Heart right ventricle (tissue), 16 donors: ENCODE measurements at regions of chrX and their contacts with region 1.

Region 1: GRCh38 chrX:69387567-69388487 is 116.3 kb upstream of the NALF2 start:
- DNase-seq: peak; percentile 32 to 33
- ATAC-seq: peak in 6 of 8 donors; percentile 46 to 75 (median 68)
- H3K4me3 ChIP-seq: no peak overlapping the region
- H3K27ac ChIP-seq: no peak overlapping the region
- H3K4me1 ChIP-seq: peaks cover 0 to 4% (median 0%) of the 10 kb centered on the region in 9 donors
- H3K27me3 ChIP-seq: peaks cover 0 to 65% (median 0%) of the 10 kb centered on the region in 7 donors
- CTCF ChIP-seq: peak; percentile 23 to 78 (median 70)

Region 2: DNA sequence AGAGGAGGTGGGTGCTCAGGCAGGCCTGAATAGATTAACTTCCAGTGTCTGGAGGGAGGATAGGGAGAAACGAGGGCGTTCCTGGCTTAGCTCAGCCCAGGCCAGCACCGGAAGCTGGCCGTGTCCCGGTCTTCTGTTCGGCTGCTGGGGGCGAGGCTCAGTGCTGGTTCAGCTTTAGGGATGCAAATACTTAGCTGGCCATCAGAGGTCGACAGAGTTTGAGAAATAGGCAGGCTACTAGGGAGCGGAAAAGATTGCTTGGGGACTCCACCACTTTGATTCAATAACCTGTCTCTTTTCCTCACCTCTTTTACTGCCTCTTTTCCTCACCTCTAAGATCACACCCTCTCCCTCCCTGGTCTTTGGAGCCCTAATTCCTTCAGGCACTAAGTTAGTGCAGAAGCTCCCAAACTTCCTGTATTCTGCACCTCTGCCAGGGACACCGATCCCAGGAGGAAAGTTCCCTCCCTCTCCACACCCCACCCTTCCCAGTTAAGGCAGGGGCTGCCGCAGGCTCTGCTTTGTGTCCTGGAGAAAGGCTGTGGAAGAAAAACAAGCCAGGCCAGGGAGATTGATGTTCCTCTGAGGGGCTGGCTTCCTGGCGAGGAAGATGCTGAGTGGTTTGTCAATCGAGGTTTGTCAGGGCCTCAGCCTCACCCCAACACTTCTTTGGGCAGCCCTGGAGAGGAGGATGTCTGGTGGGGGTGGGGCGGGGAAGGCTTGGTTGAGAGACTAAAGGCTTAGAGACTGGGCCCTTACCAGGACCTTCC is 565.0 kb before region 1 on chrX:
- intact Hi-C with region 1: loop called (anchors 5 to 10 kb)
- DNase-seq: peak in 1 of 2 donors; percentile 40
- ATAC-seq: peak; percentile 79 to 93 (median 90)
- H3K4me3 ChIP-seq: no peak overlapping the region
- H3K27ac ChIP-seq: no peak overlapping the region
- H3K4me1 ChIP-seq: peaks cover 0 to 9% (median 0%) of the 10 kb centered on the region in 9 donors
- H3K27me3 ChIP-seq: peaks cover 0 to 56% (median 0%) of the 10 kb centered on the region in 7 donors
- CTCF ChIP-seq: peak; percentile 33 to 75 (median 67)

Region 3: GRCh38 chrX:69060631-69061408 is 327.0 kb before region 1 on chrX:
- intact Hi-C with region 1: loop called in 1 of 10 experiments (anchors 10 kb)
- DNase-seq: peak; percentile 22 to 60
- ATAC-seq: peak; percentile 79 to 89 (median 82)
- H3K4me3 ChIP-seq: no peak overlapping the region
- H3K27ac ChIP-seq: no peak overlapping the region
- H3K4me1 ChIP-seq: peaks cover 0 to 6% (median 0%) of the 10 kb centered on the region in 9 donors
- H3K27me3 ChIP-seq: peaks cover 0 to 8% (median 0%) of the 10 kb centered on the region in 7 donors
- CTCF ChIP-seq: peak in 8 of 9 donors; percentile 18 to 67 (median 56)

Region 4: DNA sequence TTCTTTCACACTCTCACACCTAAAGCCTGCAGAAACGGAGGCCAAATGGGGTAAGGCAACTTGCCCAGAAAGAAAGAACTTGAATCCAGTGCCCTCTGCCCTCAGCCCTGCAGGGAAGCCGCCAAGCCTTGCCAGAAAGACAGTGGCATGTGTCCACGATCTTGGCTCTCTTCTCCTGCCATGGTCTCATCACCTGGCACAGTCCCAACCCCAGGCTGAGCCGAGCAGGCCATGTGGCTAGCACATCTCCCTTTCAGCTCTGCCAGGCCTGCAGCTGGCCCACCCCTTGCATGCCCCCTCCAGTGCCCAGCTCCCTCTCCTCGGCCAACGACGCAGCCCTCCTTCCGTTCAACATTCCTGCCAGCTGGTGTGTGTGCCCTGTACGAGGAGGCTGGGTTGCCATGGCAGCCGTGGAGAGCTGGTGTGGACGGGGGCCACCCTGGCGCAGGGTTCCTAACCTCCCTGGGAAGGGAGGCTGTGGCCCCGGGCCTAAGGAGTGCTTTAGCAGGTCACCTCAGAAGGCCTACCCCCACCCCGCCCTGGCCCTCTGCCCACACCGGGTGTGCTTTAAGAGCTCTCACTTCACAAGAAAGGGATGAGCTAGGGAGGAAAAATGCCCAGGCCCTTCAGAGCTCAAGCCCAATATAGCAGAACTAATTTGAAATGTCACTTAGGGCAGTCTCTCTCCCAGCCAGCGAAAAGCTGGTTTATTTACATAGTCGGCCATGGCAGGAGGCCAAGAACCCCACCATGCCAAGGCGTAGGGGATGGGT is 149.5 kb before region 1 on chrX:
- intact Hi-C with region 1: loop called in 2 of 10 experiments (anchors 10 kb)
- DNase-seq: peak; percentile 16 to 40
- ATAC-seq: peak; percentile 29 to 88 (median 78)
- H3K4me3 ChIP-seq: no peak overlapping the region
- H3K27ac ChIP-seq: peak overlapping the region in 5 of 10 donors; percentile 15 to 54 (median 30)
- H3K4me1 ChIP-seq: peaks cover 0 to 6% (median 0%) of the 10 kb centered on the region in 9 donors
- H3K27me3 ChIP-seq: peaks cover 0 to 42% (median 0%) of the 10 kb centered on the region in 7 donors
- CTCF ChIP-seq: no peak

Region 5: DNA sequence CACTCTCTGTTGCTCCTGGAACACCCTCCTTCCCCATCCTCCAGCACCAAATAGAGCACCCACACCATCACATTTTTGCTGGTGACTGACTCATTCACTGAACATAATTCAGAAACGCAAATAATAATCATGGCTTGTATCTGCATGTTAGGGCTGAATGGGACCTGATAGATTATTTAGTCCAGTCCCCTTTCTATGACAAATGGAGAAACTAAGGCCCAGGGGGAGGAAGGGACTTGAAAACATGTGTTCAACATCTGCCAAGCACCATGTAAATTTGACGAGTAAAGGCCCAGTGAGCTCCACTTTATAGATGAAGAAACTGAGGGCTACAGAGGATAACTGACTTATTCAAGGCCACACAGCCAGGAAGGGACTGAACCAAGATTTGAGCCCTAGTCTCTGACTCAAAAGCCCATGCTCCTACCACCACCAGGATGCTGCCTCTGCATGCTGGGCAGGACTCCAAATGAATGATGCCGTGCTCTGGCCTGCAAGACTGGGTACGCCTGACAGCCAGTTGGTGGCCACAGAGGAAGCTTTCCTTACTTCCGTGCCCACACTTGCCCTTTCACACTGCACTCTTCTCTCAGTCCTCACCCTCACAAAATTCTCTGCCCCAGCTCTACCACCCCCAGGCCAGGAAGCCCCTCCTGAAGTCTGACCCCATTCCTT is 89.2 kb before region 1 on chrX:
- intact Hi-C with region 1: loop called in 4 of 10 experiments (anchors 10 kb)
- DNase-seq: no peak
- ATAC-seq: peak in 2 of 8 donors; percentile 33 to 46
- H3K4me3 ChIP-seq: no peak overlapping the region
- H3K27ac ChIP-seq: no peak overlapping the region
- H3K4me1 ChIP-seq: no peaks in the 10 kb centered on the region
- H3K27me3 ChIP-seq: peaks cover 0 to 15% (median 0%) of the 10 kb centered on the region in 7 donors
- CTCF ChIP-seq: no peak

Region 6: GRCh38 chrX:69305333-69306062 is 82.3 kb before region 1 on chrX:
- intact Hi-C with region 1: loop called in 2 of 10 experiments (anchors 10 kb)
- DNase-seq: no peak
- ATAC-seq: no peak
- H3K4me3 ChIP-seq: no peak overlapping the region
- H3K27ac ChIP-seq: no peak overlapping the region
- H3K4me1 ChIP-seq: no peaks in the 10 kb centered on the region
- H3K27me3 ChIP-seq: peaks cover 0 to 39% (median 0%) of the 10 kb centered on the region in 7 donors
- CTCF ChIP-seq: no peak